Adrenal gland (tissue), 19 donors: ENCODE measurements at regions of chr1 and their contacts with region 1.

Region 1: GRCh38 chr1:40849801-40850592 is 12.2 kb downstream of the CITED4 start:
- DNase-seq: peak; percentile 57 to 91 (median 80)
- H3K4me3 ChIP-seq: no peak overlapping the region
- H3K27ac ChIP-seq: no peak overlapping the region
- H3K4me1 ChIP-seq: no peaks in the 10 kb centered on the region
- H3K27me3 ChIP-seq: no peaks in the 10 kb centered on the region
- CTCF ChIP-seq: peak; percentile 71 to 88 (median 86)
- POLR2A ChIP-seq: no peak

Region 2: GRCh38 chr1:40625066-40625465 is 224.9 kb before region 1 on chr1:
- intact Hi-C with region 1: loop called in 1 of 2 experiments (anchors 10 kb)
- DNase-seq: peak; percentile 55 to 78 (median 67)
- H3K4me3 ChIP-seq: no peak overlapping the region
- H3K27ac ChIP-seq: no peak overlapping the region
- H3K4me1 ChIP-seq: no peaks in the 10 kb centered on the region
- H3K27me3 ChIP-seq: no peaks in the 10 kb centered on the region
- CTCF ChIP-seq: peak; percentile 22 to 50 (median 49)
- POLR2A ChIP-seq: no peak

Region 3: DNA sequence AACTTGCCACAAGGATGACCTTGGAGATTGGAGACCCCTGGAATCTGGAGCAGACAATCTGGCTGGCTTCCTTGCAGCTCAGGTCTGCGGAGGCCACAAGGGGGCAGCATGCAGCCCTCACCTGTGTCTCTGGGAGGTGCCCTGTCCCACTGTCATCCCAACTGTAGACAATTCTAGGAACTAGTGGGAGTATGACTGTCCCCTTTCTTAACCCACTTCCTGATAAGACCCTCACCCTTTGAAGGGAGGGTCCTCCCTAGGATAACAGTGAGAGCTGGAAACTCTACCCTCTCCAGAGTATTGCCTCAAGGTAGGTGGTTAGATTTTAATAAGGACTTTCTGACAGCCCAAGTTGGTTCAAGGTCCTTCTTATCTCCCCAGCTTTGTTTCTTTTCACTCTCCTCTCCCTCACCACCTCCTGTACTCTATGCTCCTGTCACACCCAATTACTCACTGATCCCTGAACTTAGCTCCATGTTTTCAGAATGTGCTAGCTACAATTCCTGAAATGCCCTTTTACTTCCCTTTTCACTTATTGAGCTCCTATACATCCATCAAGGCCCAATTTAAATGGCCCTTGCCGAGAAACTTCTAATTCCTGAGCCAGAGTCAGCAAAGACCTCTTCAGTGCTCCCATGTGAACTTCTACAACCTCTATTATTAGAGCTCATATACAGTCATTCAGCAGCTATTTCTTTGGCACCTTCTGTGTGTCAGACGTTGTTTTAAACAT is 75.6 kb before region 1 on chr1:
- intact Hi-C with region 1: loop called in 1 of 2 experiments (anchors 5 kb)
- DNase-seq: peak in 6 of 7 donors; percentile 41 to 75 (median 54)
- H3K4me3 ChIP-seq: no peak overlapping the region
- H3K27ac ChIP-seq: no peak overlapping the region
- H3K4me1 ChIP-seq: no peaks in the 10 kb centered on the region
- H3K27me3 ChIP-seq: no peaks in the 10 kb centered on the region
- CTCF ChIP-seq: peak; percentile 45 to 74 (median 58)
- POLR2A ChIP-seq: no peak

Region 4: DNA sequence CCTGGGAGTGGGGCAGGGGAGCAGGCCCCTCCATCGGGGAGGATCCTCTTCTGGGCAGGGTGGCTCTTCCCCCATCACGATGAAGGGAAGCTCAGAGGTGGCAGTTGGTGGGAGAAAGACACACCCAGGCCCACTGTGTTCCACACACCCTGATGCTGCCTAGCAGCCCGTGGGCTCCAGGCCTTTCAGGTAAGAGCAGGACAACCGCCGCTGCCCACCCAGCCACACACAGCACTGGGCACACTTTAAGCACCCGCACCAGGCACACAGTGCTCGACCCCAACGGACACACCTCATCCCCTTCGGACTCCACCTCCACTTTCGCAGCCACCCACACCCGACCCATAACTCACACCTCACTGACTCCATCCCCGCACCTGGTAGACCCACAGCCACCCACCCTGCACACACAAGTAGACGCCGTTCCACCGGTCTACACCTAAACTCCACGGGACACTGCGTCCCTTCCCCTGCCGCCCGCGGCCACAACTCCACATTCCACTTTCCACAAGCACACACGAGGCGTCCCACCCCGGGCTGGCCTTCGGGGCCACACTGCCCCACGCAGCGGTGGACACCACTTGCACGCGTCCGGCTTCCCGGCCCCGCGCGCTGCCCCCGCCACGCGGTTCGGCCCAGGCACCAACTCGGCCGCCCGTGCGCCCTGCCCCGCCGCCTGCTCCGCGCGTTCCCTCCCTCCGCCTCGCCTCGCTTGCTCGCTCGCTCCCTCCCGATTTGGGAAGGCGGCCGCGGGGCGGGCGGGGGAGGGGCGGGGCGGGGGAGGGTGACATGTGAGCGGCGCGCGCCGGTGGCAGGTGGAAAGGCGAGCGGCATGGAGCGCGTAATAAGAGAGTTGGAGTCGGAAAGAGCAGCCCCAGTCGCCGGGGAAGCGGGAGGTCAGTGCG is 66.7 kb before region 1 on chr1 and contains the start of gene KCNQ4:
- intact Hi-C with region 1: loop called in 1 of 2 experiments (anchors 5 kb)
- DNase-seq: peak; percentile 44 to 64 (median 56)
- H3K4me3 ChIP-seq: peak within 1 kb of the TSS in 1 of 4 donors; percentile 80
- H3K27ac ChIP-seq: no peak within 1 kb of the TSS
- H3K4me1 ChIP-seq: peaks cover 0 to 14% of the 10 kb centered on the region in 2 donors
- H3K27me3 ChIP-seq: no peaks in the 10 kb centered on the region
- CTCF ChIP-seq: no peak
- POLR2A ChIP-seq: no peak
- total RNA-seq, gene KCNQ4: 0.06 to 0.42 (median 0.29) TPM in 7 of 9 donors, not detected in the others

Region 5: GRCh38 chr1:40817791-40818263 is 32.2 kb before region 1 on chr1:
- intact Hi-C with region 1: no loop called
- DNase-seq: no peak
- H3K4me3 ChIP-seq: peak overlapping the region in 1 of 4 donors; percentile 41
- H3K27ac ChIP-seq: no peak overlapping the region
- H3K4me1 ChIP-seq: no peaks in the 10 kb centered on the region
- H3K27me3 ChIP-seq: no peaks in the 10 kb centered on the region
- CTCF ChIP-seq: no peak
- POLR2A ChIP-seq: no peak

Region 6: GRCh38 chr1:40951943-40952743 is 102.1 kb after region 1 on chr1:
- intact Hi-C with region 1: loop called (anchors 2 to 5 kb)
- DNase-seq: peak; percentile 66 to 89 (median 72)
- H3K4me3 ChIP-seq: no peak overlapping the region
- H3K27ac ChIP-seq: no peak overlapping the region
- H3K4me1 ChIP-seq: no peaks in the 10 kb centered on the region
- H3K27me3 ChIP-seq: no peaks in the 10 kb centered on the region
- CTCF ChIP-seq: peak; percentile 78 to 93 (median 92)
- POLR2A ChIP-seq: no peak